K562 (cell line): ENCODE measurements at regions of chr21 and their contacts with region 1.

Region 1: GRCh38 chr21:34073032-34073869 is at the starts of genes MRPS6 and SLC5A3:
- DNase-seq: peak; percentile 91 to 96 (median 94)
- ATAC-seq: peak; percentile 82
- H3K4me3 ChIP-seq: peak within 1 kb of the TSS; percentile 65
- H3K27ac ChIP-seq: peak within 1 kb of the TSS; percentile 87
- H3K4me1 ChIP-seq: peaks cover 9 to 36% of the 10 kb centered on the region in 2 experiments; a peak in 4 of 5 replicates
- H3K27me3 ChIP-seq: peaks cover 0 to 5% of the 10 kb centered on the region in 2 experiments; a peak in 2 of 5 replicates
- CTCF ChIP-seq: peak in 2 of 3 experiments; percentile 41 to 50; a peak in 3 of 6 replicates
- EP300 ChIP-seq: peak; percentile 27
- POLR2A ChIP-seq: peak; percentile 87
- RAD21 ChIP-seq: peak; percentile 44 to 55
- polyA plus RNA-seq, gene MRPS6: 31.5 to 39.3 TPM
- polyA plus RNA-seq, gene SLC5A3: 2.9 to 3.4 TPM

Region 2: DNA sequence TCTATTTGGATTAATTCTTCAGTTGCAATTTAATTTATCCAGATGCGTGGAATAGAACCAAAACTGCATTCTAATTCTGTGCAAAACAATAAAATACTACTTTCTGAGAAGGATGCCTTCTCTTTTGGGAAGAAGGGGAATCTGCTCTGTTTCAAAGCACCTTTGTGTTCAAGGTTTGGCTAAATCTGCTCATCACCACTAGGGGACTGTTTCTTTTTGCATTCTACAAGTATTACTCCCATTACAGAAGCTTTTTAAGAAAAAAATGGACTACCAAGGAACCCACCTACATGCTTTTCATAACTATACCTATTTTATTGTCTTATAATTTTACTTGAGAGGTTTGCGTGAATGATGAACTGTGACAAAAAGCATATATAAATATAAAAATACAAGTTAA is 18.4 kb after region 1 on chr21:
- CTCF ChIA-PET with region 1: no interaction called
- POLR2A ChIA-PET with region 1: interaction called, 33 read pairs
- in situ Hi-C with region 1: no loop called
- intact Hi-C with region 1: no loop called
- DNase-seq: peak in 2 of 4 experiments; percentile 34 to 39
- ATAC-seq: no peak
- H3K4me3 ChIP-seq: no peak overlapping the region
- H3K27ac ChIP-seq: no peak overlapping the region
- H3K4me1 ChIP-seq: peaks cover 4 to 25% of the 10 kb centered on the region in 2 experiments; a peak in 3 of 5 replicates
- H3K27me3 ChIP-seq: no peaks in the 10 kb centered on the region
- CTCF ChIP-seq: peak; percentile 8 to 37 (median 34); a peak in 3 of 6 replicates
- EP300 ChIP-seq: no peak
- POLR2A ChIP-seq: no peak
- RAD21 ChIP-seq: no peak

Region 3: DNA sequence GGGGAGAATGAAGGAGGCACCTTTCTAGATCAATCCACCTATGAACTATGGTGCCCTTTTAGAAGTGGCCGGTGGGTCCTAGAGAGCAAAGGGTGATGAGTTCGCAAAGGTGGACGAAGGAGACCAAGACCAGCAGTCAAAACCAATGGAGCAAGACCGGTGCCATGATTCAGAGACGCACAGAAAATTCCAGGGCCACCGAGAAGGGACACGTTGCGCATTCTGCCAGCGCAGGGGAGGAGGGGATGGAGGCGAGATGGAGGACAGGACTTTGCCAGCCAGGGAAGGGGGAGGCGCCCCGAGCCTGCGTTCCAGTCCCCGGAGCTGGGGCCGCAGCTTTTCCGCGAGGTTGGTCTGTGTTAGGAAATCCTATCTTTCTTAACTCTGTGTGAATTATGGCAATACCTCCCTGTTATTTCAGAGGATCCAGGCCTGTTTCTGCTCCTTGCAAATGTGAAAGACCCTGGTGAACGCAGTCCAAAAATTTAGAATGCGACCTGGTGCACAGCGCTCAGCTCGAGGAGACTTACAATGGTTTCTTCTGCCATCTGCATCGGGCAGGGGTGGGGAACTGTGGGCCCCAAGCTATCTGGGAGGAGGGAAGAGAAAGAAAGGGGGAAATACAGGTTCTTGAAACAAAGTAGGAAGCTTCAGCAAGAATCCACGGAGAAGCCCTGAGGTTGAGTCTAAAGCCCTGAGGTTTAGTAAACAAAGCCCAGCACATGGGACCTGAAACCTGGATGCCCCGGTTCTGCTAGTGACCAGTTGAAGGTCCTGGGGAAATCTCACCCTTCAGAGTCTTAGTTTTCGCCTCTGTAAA is 129.5 kb after region 1 on chr21:
- CTCF ChIA-PET with region 1: no interaction called
- POLR2A ChIA-PET with region 1: interaction called, 4 read pairs
- in situ Hi-C with region 1: no loop called
- intact Hi-C with region 1: loop called (anchors 10 kb)
- DNase-seq: no peak
- ATAC-seq: peak; percentile 37
- H3K4me3 ChIP-seq: no peak overlapping the region
- H3K27ac ChIP-seq: no peak overlapping the region
- H3K4me1 ChIP-seq: peaks cover 10 to 19% of the 10 kb centered on the region in 2 experiments; a peak in 4 of 5 replicates
- H3K27me3 ChIP-seq: no peaks in the 10 kb centered on the region
- CTCF ChIP-seq: no peak
- EP300 ChIP-seq: no peak
- POLR2A ChIP-seq: no peak
- RAD21 ChIP-seq: no peak

Region 4: DNA sequence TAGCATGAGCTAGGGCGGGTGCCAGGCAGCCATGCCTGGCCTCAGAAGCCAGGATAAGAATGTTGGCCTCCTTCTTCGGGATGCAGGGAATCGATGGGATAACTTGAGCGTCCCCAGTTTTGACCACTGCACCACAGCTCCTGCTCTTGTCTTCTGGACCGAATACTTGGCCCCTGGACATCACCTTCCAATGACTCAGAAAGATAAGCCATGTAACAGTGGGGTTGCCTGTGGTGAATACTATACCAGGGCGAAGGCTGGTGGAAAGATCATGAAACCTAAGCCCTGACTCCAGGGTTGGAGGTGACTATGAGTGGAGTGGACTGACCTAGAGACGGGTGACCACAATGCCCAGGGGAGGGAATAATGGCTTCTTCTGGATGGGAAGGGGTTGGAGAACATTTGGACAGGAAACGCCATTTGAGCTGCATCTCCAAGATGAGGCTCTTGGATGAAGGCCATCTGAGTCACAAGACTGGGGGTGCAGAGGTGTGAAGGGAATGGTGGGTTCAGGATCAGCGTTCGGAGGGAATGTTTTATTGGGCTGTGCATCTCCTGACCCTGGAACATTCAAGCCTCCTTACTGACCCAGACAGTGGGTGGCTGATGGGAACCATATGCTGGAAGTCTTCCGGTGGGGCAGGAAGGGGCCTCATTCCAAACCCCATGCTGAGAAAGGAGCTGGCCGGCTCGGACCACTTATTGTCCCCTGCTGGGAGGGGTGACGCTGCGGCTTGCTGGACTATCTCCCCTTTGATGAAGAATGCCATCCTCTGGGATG is 272.0 kb after region 1 on chr21:
- CTCF ChIA-PET with region 1: no interaction called
- POLR2A ChIA-PET with region 1: no interaction called
- in situ Hi-C with region 1: no loop called
- intact Hi-C with region 1: loop called (anchors 5 kb)
- DNase-seq: no peak
- ATAC-seq: no peak
- H3K4me3 ChIP-seq: no peak overlapping the region
- H3K27ac ChIP-seq: no peak overlapping the region
- H3K4me1 ChIP-seq: no peaks in the 10 kb centered on the region
- H3K27me3 ChIP-seq: peaks cover 41 to 44% of the 10 kb centered on the region in 2 experiments
- CTCF ChIP-seq: no peak
- EP300 ChIP-seq: no peak
- POLR2A ChIP-seq: no peak
- RAD21 ChIP-seq: no peak